Activated naive CD4-positive, alpha-beta T cell treated with anti-CD3 and anti-CD28 coated beads for 36 hours (primary cell): ENCODE measurements at regions of chr6 and their contacts with region 1.

Region 1: DNA sequence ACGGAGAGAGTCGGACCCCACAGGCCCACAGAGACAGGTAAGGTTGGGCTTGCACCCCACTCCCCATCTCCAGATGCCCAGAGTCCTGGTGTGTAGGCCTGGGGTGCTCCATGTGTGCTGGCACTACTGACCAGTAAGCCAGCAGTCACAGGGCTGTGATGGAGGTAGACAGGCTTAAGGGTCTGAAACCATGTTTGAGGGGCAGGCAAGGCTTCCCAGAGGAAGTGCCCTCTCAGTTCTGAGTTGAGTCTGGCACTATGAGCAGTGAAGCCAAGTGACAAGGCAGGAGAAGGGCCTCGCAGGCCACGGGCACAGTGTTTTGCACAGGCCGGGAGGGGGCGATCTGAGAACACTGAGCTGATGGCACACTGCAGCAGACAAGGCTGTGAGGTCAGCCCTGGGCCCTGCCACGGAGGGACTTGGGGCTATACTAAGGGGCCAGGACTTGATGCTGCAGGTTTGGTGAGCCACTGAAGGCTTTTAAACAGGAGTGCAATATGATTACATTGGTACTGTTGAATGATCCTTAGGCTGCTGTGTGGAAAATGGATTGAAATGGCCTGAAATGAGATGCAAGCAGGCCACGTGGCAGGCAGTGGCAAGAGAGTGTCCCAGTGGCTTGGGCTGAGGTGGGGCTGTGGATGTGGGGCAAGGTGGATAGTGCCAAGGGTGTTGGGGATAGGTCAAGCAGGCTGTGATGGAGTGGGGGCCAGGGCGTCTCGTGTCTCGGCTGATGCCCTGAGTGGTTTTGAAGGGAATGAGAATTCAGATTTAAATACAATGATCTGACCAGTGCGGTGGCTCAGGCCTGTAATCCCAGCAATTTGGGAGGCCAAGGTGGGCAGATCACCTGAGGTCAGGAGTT is 20.3 kb downstream of the TTBK1 start:
- DNase-seq: peak; percentile 88
- H3K4me3 Mint-ChIP-seq: no peak overlapping the region
- H3K27ac Mint-ChIP-seq: no peak overlapping the region
- H3K4me1 Mint-ChIP-seq: no peaks in the 10 kb centered on the region
- H3K27me3 Mint-ChIP-seq: no peaks in the 10 kb centered on the region

Region 2: GRCh38 chr6:43334466-43335095 is 71.0 kb after region 1 on chr6:
- CTCF ChIA-PET with region 1: no interaction called
- intact Hi-C with region 1: loop called (anchors 1 kb)
- DNase-seq: no peak
- H3K4me3 Mint-ChIP-seq: no peak overlapping the region
- H3K27ac Mint-ChIP-seq: no peak overlapping the region
- H3K4me1 Mint-ChIP-seq: peaks cover 21% of the 10 kb centered on the region
- H3K27me3 Mint-ChIP-seq: no peaks in the 10 kb centered on the region

Region 3: GRCh38 chr6:43402820-43403219 is 139.3 kb after region 1 on chr6:
- CTCF ChIA-PET with region 1: interaction called, 12 read pairs
- intact Hi-C with region 1: loop called (anchors 1 kb)
- DNase-seq: no peak
- H3K4me3 Mint-ChIP-seq: no peak overlapping the region
- H3K27ac Mint-ChIP-seq: no peak overlapping the region
- H3K4me1 Mint-ChIP-seq: peaks cover under 1% of the 10 kb centered on the region
- H3K27me3 Mint-ChIP-seq: peaks cover 2% of the 10 kb centered on the region

Region 4: DNA sequence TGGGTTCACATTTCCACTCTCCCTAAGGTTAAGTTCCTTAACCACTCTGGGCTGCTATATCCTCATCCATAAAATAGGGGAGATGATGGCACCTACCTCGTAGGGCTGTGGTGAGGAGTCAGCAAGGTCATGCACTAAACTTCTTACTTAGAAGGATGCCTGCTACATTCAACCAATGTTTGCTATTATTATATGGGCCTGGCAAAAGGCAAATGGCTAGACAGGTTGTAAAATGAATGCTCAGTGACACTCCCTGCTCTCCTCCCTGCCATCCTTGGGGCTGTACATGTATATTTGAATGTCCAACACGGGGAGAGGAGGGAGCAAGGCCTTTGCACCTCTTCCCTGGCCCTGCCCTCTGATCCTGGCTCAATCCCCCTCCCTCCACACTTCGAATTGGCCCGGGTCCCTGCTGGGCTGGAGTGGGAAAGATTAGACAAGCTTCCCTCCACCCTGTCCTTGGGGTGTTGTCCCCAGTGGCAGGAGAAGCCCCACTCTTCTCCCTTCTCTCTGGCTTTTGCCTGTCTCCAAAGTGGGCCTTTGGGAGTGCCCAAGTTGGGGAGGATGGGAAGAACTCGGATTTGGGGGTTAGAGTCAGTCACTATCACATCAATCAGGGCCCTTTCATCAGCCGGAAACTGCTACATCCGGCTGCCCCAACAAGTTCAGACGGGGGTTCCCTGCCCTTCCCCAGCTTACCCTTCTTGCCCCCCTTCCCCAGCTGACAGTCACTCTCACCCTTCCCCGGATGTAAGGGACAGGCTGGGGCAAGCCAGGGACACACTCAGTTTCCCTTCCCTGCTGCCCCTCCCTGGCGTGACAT is 470.1 kb after region 1 on chr6:
- CTCF ChIA-PET with region 1: no interaction called
- intact Hi-C with region 1: no loop called
- DNase-seq: peak; percentile 87
- H3K4me3 Mint-ChIP-seq: no peak overlapping the region
- H3K27ac Mint-ChIP-seq: peak overlapping the region; percentile 83
- H3K4me1 Mint-ChIP-seq: peaks cover 21% of the 10 kb centered on the region
- H3K27me3 Mint-ChIP-seq: no peaks in the 10 kb centered on the region

Region 5: DNA sequence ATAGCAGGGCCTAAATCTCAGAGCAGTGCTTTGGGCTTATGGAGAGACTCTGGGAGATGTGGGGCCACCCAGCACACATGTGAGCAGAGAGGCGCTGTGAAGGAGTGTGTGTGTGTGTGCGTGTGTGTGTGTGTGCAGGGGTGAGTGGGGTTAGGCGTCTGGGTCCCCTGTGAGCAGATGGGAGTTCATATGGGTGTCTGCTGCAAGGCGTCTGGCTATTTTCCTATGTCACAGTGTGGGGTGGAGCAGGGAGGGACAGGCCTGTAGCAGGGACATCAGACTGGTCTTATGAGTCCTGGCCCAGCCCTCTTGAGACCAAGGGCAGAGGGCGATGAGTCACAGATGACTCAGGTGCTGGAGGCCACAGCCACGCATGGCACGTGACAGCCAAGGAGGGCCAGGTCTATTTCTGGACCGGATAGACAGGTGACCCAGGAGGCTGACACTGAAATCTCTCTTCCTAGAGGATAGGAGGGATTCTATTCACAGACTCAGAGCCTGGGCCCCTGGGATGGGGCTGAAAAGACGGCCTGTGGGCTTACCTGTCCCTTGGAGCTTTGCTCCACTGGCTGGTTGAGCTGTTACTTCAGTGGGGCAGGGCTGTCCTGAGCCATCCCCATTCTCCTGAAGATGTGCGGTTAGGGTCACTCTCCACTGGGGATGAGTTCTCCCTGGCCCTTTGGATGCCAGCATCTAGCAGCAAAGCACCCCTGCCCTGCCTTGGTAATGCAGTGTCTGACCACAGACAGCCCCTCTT is 535.3 kb after region 1 on chr6:
- CTCF ChIA-PET with region 1: no interaction called
- intact Hi-C with region 1: no loop called
- DNase-seq: peak; percentile 30
- H3K4me3 Mint-ChIP-seq: no peak overlapping the region
- H3K27ac Mint-ChIP-seq: no peak overlapping the region
- H3K4me1 Mint-ChIP-seq: peaks cover 7% of the 10 kb centered on the region
- H3K27me3 Mint-ChIP-seq: no peaks in the 10 kb centered on the region

Region 6: DNA sequence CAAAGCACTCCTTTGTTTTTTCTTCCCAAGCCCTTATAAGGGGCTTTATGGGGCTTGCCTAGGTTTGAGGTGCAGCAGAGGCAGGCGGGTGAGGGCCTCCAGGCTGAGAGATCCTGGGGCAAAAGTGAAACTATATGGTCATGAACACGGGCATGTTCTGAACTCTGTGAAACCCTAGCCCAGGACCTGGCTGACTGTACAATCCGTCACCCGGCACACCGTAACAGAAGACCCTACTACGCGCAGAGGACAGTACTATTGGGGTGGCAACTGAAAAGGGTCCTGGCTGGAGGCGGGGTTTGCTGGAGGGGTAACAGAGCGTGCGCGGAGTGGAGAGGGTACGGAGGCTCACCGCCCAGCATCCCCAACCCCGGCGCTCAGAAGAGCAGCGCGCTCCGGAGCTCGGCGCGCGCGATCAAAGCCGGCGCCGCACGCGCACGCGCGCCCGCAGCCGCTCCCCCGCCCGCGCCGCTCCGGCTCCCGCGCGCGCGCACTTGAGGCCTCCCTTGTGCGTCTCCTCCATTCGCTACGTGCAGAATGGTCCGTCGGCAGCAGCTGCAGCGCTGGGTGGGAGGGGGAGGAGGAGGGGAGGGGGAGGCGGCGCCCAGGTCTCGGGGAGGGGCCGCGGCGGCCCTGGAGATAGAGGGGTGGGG is 809.5 kb after region 1 on chr6:
- CTCF ChIA-PET with region 1: no interaction called
- intact Hi-C with region 1: no loop called
- DNase-seq: peak; percentile 82
- H3K4me3 Mint-ChIP-seq: peak overlapping the region; percentile 81
- H3K27ac Mint-ChIP-seq: no peak overlapping the region
- H3K4me1 Mint-ChIP-seq: peaks cover 19% of the 10 kb centered on the region
- H3K27me3 Mint-ChIP-seq: peaks cover 7% of the 10 kb centered on the region